ENCODE measurements at regions of chr2 and their contacts with region 1.

Region 1: GRCh38 chr2:70340921-70341765 is 39.3 kb upstream of the FAM136A start:
- H3K4me3 Mint-ChIP-seq: no peak overlapping the region
- H3K27ac Mint-ChIP-seq: no peak overlapping the region
- H3K4me1 Mint-ChIP-seq: peaks cover 13% of the 10 kb centered on the region
- H3K27me3 Mint-ChIP-seq: peaks cover 26% of the 10 kb centered on the region

Region 2: DNA sequence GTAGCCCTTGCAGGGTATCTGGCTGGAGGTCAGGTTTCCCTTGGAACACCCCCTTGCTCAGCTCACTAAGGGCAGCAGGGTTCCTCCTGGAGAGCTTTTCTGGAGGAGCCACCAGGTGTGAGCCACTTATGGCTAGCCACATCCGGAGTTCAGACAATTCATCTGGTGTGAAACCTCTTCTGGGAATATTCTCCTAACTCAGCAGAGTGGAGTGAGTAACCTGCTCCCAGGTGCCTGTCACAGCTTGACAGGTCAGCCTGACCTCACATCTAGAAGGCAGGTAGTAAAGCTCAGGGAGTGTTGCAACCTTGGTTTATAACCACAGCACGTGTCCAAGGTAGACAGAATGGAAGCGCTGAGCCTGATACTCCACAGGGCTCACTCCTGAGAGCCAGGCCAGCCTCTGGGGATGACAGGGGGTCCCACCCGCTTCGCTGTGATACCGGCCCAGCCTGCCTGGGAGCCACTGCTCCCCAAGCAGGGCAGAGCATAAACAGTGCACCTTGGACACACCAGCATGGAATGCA is 275.1 kb after region 1 on chr2:
- intact Hi-C with region 1: loop called (anchors 1 kb)
- H3K4me3 Mint-ChIP-seq: no peak overlapping the region
- H3K27ac Mint-ChIP-seq: no peak overlapping the region
- H3K4me1 Mint-ChIP-seq: peaks cover 7% of the 10 kb centered on the region
- H3K27me3 Mint-ChIP-seq: peaks cover 28% of the 10 kb centered on the region

Region 3: DNA sequence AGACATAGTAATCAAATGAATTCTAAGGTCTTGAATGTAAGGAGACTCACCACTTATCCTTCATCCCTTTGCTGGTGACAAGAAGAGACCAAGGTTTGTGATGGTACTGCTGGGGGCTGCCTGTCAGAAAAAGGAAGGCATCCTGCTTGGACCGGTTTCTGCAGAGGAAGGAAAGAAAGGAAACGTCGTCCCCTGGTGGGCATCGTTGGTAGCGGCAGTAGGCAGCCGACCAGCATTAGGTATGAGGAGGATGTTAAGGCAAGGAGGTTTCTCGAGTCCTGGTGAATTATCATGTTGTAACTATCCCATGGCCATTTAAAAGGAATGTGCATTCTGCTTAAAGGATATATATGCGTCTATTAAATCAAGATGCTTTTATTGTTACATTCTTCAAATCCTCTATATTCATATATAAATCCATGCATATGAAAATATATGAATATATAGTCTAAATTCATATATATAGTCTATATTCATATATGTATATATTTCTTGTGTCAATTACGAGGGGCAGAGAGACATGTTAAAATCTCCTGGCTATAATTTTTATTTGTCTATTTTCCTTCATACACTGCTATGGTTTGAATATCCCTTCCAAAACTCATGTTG is 306.8 kb after region 1 on chr2:
- intact Hi-C with region 1: loop called (anchors 10 kb)
- H3K4me3 Mint-ChIP-seq: no peak overlapping the region
- H3K27ac Mint-ChIP-seq: no peak overlapping the region
- H3K4me1 Mint-ChIP-seq: peaks cover 12% of the 10 kb centered on the region
- H3K27me3 Mint-ChIP-seq: peaks cover 15% of the 10 kb centered on the region

Measured in dendritic cell treated with granulocyte-macrophage colony-stimulating factor and Interleukin-4, amounts not matched to agents 40 ng/mL and 50 ng/mL, for 4 days (primary cell).